ENCODE measurements at regions of chr6 and their contacts with region 1.

Region 1: DNA sequence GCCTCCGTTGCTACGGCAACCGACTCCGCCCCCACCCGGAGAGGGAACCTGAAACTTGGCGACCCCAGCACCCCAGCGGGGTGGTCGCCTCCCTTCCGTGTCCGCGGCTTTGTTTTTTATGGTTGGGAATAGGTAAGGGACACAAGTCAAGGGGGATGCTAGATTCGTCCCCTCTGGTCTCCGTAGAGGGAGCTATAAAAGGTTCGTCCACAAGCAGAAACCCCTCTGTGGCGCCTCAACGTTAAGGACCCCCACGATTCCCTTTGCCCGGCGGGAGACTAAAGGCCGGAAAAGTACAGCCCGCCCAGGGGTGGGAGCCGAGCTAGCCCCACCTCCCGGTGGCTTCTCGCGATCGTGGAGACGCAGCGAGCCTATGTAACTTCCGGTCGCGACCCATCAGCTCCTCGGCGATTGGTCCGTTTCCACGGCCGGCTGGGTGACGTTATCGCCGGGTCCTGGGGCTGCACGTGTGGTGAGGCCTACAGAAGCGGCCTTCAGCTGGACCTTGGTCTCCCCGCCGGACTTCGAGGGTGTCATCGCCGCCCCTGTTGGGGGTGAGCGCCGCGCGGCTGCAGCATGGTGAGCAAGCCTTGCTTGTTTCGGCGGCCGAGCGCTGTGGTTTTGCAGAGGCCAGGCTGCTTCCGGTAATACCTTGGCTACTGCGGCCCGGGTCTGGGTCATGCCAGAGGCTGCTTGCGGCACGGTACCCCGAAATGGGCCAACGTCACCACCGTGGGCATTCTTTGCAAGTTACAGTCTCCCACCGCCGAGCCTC is at the start of gene LTV1:
- DNase-seq: peak; percentile 87 to 92
- H3K4me3 ChIP-seq: peak within 1 kb of the TSS; percentile 94
- H3K27ac ChIP-seq: peak within 1 kb of the TSS; percentile 72
- H3K4me1 ChIP-seq: peaks cover 17% of the 10 kb centered on the region; the same call in 1 of the 2 replicates
- H3K27me3 ChIP-seq: no peaks in the 10 kb centered on the region
- CTCF ChIP-seq: no peak
- total RNA-seq, gene LTV1: 15.4 and 18.3 TPM in 2 replicates

Region 2: GRCh38 chr6:142773859-142774648 is 1069.0 kb before region 1 on chr6:
- CTCF ChIA-PET with region 1: no interaction called
- POLR2A ChIA-PET with region 1: interaction called, 10 read pairs
- intact Hi-C with region 1: no loop called
- DNase-seq: no peak
- H3K4me3 ChIP-seq: no peak overlapping the region
- H3K27ac ChIP-seq: no peak overlapping the region
- H3K4me1 ChIP-seq: no peaks in the 10 kb centered on the region
- H3K27me3 ChIP-seq: no peaks in the 10 kb centered on the region
- CTCF ChIP-seq: no peak

Region 3: GRCh38 chr6:143575440-143575839 is 267.6 kb before region 1 on chr6:
- CTCF ChIA-PET with region 1: no interaction called
- POLR2A ChIA-PET with region 1: no interaction called
- intact Hi-C with region 1: loop called (anchors 2 kb)
- DNase-seq: peak; percentile 48 to 56
- H3K4me3 ChIP-seq: no peak overlapping the region
- H3K27ac ChIP-seq: no peak overlapping the region
- H3K4me1 ChIP-seq: no peaks in the 10 kb centered on the region
- H3K27me3 ChIP-seq: no peaks in the 10 kb centered on the region
- CTCF ChIP-seq: peak; percentile 93

Region 4: DNA sequence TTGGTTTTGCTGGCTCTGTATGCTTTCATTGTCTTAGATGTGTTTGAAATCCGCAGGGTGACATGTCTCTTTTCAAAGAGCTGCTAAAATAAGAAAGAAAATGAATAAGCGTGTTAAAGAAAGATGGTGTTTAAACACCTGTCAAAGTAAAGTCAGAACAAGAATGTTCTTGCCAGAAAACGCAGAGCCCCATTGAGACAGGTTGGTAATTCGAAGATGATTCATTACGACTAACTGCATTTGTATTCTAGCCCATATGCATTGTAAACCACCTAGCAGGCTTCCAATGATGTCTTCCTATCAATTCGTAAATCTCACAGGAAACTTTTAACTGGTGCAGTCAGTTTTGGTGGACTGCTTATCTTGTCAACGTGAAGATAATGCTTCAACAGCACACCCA is 148.5 kb before region 1 on chr6:
- CTCF ChIA-PET with region 1: no interaction called
- POLR2A ChIA-PET with region 1: no interaction called
- intact Hi-C with region 1: loop called (anchors 5 kb)
- DNase-seq: no peak
- H3K4me3 ChIP-seq: no peak overlapping the region
- H3K27ac ChIP-seq: no peak overlapping the region
- H3K4me1 ChIP-seq: peaks cover 17% of the 10 kb centered on the region; the same call in 1 of the 2 replicates
- H3K27me3 ChIP-seq: no peaks in the 10 kb centered on the region
- CTCF ChIP-seq: no peak

Region 5: DNA sequence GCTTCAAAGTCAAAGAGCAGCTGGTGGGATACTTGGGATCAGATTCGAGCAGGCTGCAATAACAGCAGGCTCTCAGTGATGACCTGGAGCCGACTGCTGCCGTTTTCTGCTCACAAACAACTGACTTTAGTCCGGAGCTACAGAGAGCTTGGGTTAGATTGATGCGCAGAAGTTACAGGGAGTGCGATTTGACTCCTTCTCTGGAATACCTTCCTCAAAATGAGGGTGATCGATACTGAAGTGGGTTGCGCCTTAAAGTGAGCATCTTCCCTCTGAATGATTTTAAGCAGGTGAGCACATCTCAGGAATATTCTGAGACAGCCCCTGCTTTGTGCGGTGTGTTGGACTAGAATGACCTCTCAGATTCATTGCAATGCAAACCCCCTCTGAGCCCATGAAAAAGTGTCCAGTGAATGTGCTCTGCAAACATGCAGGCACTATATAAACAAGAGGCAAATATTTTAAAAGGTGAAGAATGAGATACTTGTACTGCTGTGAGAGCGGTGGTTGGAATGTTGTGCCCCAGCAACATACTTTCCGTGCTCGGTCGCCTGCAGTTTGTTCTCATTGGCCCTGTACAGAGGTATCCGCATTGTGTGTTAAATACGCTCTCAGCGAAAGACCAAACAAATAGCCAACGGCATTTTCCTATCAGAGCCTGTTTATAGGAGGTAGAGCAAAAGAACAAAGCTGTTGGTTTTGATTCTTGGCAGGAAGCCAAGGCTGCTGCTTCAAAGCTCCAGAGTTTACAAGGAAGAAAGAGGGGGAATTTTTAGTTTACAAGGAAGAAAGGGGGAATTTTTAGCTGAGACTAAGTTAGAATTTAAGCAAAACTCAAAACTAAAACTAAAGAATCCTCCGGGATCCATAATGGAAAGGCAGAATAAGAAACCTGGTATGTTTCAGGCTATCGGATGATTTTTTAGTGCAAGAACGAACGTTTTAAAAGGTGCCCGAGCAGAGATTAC is 97.6 kb before region 1 on chr6:
- CTCF ChIA-PET with region 1: no interaction called
- POLR2A ChIA-PET with region 1: no interaction called
- intact Hi-C with region 1: loop called (anchors 2 kb)
- DNase-seq: peak; percentile 78 to 80
- H3K4me3 ChIP-seq: peak overlapping the region; percentile 17; the same call in 1 of the 2 replicates
- H3K27ac ChIP-seq: peak overlapping the region; percentile 54
- H3K4me1 ChIP-seq: peaks cover 32% of the 10 kb centered on the region
- H3K27me3 ChIP-seq: no peaks in the 10 kb centered on the region
- CTCF ChIP-seq: no peak

Region 6: DNA sequence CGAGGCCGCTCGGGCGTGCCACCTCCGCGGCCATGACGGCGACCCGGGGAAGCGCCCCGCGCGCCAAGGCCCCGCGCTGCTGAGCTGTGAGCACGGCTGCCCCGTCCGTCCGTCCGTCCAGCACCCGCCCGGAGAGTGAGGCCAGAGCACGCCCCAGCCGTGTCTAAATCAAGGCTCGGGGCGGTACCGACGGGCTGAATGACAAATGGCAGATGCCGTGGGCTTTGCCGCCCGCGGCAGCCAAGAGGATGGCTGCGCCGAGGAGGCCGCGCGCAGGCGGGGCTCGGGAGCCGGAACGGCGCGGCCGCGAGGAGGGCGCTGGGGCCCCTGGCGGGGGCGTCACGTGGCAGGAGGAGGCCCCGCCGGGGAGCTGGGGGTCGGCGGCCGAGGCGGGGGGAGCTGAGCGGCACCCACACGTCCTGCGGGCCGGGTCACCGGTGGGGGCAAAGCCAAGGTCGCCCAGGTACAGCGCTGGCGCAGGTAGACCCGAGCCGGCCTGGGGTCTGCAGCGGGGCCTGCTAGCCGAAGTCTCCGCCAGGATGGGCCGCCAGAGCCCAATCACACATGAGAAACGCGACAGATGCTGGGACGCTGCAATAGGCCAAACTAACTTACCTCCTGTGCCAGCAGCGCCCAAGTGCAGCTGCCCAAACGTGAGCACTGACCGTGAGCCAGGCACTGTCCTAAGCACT is 165.2 kb after region 1 on chr6 and contains the start of gene PLAGL1:
- CTCF ChIA-PET with region 1: no interaction called
- POLR2A ChIA-PET with region 1: no interaction called
- intact Hi-C with region 1: loop called (anchors 5 kb)
- DNase-seq: peak in 1 of 2 experiments; percentile 51
- H3K4me3 ChIP-seq: peak within 1 kb of the TSS; percentile 61
- H3K27ac ChIP-seq: no peak within 1 kb of the TSS
- H3K4me1 ChIP-seq: 0 out of 2 replicates have a peak, but pooled peaks cover 5% of the 10 kb centered on the region
- H3K27me3 ChIP-seq: peaks cover 4% of the 10 kb centered on the region; the same call in 1 of the 2 replicates
- CTCF ChIP-seq: no peak
- total RNA-seq, gene PLAGL1: 7.8 and 8.3 TPM in 2 replicates

Measured in PC-9 (cell line).